Panc1 (cell line): ENCODE measurements at regions of chr5 and their contacts with region 1.

Region 1: GRCh38 chr5:177311723-177312648 is at the start of gene MXD3:
- DNase-seq: no peak
- ATAC-seq: peak; percentile 69
- H3K4me3 ChIP-seq: peak within 1 kb of the TSS; percentile 39 to 58
- H3K27ac ChIP-seq: peak within 1 kb of the TSS; percentile 76
- H3K4me1 ChIP-seq: peaks cover 12% of the 10 kb centered on the region
- H3K27me3 ChIP-seq: no peaks in the 10 kb centered on the region
- CTCF ChIP-seq: no peak
- total RNA-seq, gene MXD3: 12.0 TPM

Region 2: GRCh38 chr5:177124486-177124991 is 187.4 kb before region 1 on chr5:
- CTCF ChIA-PET with region 1: no interaction called
- POLR2A ChIA-PET with region 1: interaction called, 10 read pairs
- in situ Hi-C with region 1: no loop called
- intact Hi-C with region 1: no loop called
- DNase-seq: no peak
- ATAC-seq: no peak
- H3K4me3 ChIP-seq: no peak overlapping the region
- H3K27ac ChIP-seq: no peak overlapping the region
- H3K4me1 ChIP-seq: no peaks in the 10 kb centered on the region
- H3K27me3 ChIP-seq: no peaks in the 10 kb centered on the region
- CTCF ChIP-seq: no peak

Region 3: GRCh38 chr5:177351385-177352329 is 39.7 kb after region 1 on chr5 and contains the start of gene LMAN2:
- CTCF ChIA-PET with region 1: interaction called, 11 read pairs
- POLR2A ChIA-PET with region 1: no interaction called
- in situ Hi-C with region 1: no loop called
- intact Hi-C with region 1: no loop called
- DNase-seq: peak; percentile 79
- ATAC-seq: peak; percentile 99
- H3K4me3 ChIP-seq: peak within 1 kb of the TSS; percentile 90 to 95
- H3K27ac ChIP-seq: peak within 1 kb of the TSS; percentile 90
- H3K4me1 ChIP-seq: peaks cover 23% of the 10 kb centered on the region
- H3K27me3 ChIP-seq: no peaks in the 10 kb centered on the region
- CTCF ChIP-seq: no peak
- total RNA-seq, gene LMAN2: 140 TPM

Region 4: DNA sequence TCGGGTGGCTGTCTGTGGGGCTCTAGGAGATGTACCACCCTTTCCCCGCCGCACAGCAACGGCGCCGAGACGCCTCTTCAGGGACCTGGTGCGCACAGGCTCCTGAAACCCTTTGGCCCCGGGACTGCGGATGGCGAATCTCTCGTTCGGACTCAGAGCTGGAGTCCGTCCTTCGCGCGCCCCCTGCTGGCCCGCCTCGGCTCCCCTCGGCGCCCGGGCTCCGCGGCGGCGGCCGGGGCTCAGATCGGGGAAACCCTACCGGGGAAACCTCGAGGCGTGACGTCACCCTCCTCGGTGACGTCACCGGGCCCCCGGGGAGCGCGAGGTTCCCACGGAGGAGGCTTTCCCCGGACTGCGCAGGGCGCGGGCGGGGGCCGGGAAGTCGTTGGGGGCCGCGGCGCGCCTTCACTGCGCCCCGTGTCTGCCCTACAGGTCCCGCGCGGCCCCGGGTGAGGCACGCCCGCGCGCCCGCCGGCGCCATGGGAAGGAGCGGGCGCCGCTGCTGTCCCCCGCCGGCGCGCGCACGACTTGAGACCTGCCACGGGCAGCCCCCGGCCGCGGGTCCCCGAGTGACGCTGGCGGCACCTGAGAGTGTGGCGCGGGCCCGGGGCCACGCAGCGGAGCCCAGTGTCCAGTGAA is 142.5 kb after region 1 on chr5:
- CTCF ChIA-PET with region 1: interaction called, 3 read pairs
- POLR2A ChIA-PET with region 1: no interaction called
- in situ Hi-C with region 1: no loop called
- intact Hi-C with region 1: loop called (anchors 10 kb)
- DNase-seq: peak; percentile 57
- ATAC-seq: peak; percentile 68
- H3K4me3 ChIP-seq: peak overlapping the region; percentile 50 to 61
- H3K27ac ChIP-seq: peak overlapping the region; percentile 78; the same call in 1 of the 2 replicates
- H3K4me1 ChIP-seq: peaks cover 41% of the 10 kb centered on the region
- H3K27me3 ChIP-seq: no peaks in the 10 kb centered on the region
- CTCF ChIP-seq: peak; percentile 95